ENCODE measurements at regions of chr4 and their contacts with region 1.

Region 1: GRCh38 chr4:78864405-78865024 is 74.7 kb downstream of the PAQR3 start:
- DNase-seq: peak; percentile 34
- H3K4me3 ChIP-seq: no peak overlapping the region; a peak in 1 of 4 replicates
- H3K27ac ChIP-seq: no peak overlapping the region
- H3K4me1 ChIP-seq: no peaks in the 10 kb centered on the region; a peak in 1 of 4 replicates
- H3K27me3 ChIP-seq: no peaks in the 10 kb centered on the region
- CTCF ChIP-seq: peak; percentile 91
- EP300 ChIP-seq: no peak
- RAD21 ChIP-seq: peak; percentile 94

Region 2: DNA sequence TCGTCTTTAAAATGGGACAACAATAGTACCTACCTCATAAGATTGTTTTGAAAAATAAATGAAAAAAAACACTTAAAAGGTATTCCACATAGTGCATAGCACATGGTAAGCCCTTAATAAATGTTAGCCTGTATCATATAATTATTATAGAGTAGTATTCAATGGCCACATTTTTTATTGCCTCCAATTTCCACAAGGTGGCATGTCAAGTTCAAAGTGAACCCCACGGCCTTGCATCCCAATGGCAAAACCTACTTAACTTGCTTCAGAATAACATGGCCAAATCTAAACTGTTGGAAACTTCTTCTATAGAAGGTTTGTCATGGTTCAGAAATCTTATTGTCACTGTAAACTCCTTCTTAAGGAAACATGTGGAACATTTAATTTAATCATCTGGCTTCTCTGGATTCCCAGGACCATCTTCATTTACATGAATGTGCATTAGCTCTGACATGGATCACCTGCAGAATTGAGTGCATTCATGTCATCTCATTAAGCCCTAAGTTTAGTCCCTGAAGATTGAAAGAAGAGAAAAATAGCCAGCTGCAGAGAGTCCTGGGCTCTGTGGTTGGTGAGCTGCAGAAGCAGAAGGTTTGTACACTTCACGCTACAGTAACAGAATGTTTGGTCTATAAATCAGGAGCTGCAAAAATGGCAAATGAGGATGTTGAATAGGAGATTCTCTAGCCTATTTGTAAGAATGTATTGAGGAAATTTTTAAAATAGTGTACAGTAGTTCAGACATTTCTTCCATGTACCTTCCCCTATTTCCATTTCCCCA is 251.9 kb before region 1 on chr4:
- CTCF ChIA-PET with region 1: interaction called, 80 read pairs
- POLR2A ChIA-PET with region 1: no interaction called
- DNase-seq: peak; percentile 35
- H3K4me3 ChIP-seq: no peak overlapping the region
- H3K27ac ChIP-seq: no peak overlapping the region
- H3K4me1 ChIP-seq: peaks cover 0 to 9% of the 10 kb centered on the region in 2 experiments; a peak in 1 of 4 replicates
- H3K27me3 ChIP-seq: no peaks in the 10 kb centered on the region
- CTCF ChIP-seq: peak; percentile 81
- EP300 ChIP-seq: no peak
- RAD21 ChIP-seq: peak; percentile 87

Region 3: GRCh38 chr4:78845472-78845871 is 19.0 kb before region 1 on chr4:
- CTCF ChIA-PET with region 1: interaction called, 41 read pairs
- POLR2A ChIA-PET with region 1: no interaction called
- DNase-seq: no peak
- H3K4me3 ChIP-seq: no peak overlapping the region
- H3K27ac ChIP-seq: no peak overlapping the region
- H3K4me1 ChIP-seq: no peaks in the 10 kb centered on the region; a peak in 1 of 4 replicates
- H3K27me3 ChIP-seq: no peaks in the 10 kb centered on the region
- CTCF ChIP-seq: no peak
- EP300 ChIP-seq: no peak
- RAD21 ChIP-seq: no peak

Region 4: GRCh38 chr4:79107014-79107413 is 242.5 kb after region 1 on chr4:
- CTCF ChIA-PET with region 1: no interaction called
- POLR2A ChIA-PET with region 1: no interaction called
- DNase-seq: no peak
- H3K4me3 ChIP-seq: no peak overlapping the region
- H3K27ac ChIP-seq: no peak overlapping the region
- H3K4me1 ChIP-seq: no peaks in the 10 kb centered on the region
- H3K27me3 ChIP-seq: no peaks in the 10 kb centered on the region
- CTCF ChIP-seq: no peak
- EP300 ChIP-seq: no peak
- RAD21 ChIP-seq: no peak

Region 5: DNA sequence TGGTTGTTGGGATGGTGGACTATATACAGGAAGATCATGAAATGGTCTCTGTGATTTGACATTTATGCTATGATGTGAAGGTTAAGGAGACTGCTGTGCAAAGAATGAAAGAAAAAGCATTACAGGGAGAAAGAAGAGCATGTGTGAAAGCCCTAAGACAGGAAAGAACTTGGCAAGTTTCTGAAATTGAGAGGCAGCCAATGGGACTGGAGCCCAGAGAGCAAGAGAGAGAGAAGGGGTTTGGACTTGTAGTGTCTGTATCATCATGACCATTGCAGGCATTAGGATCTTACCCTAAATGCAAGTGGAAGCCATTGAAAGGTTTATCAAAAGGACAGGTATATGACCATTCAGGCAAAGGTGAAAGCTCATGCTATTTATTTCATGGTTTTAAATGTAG is 314.2 kb after region 1 on chr4:
- CTCF ChIA-PET with region 1: no interaction called
- POLR2A ChIA-PET with region 1: no interaction called
- DNase-seq: no peak
- H3K4me3 ChIP-seq: no peak overlapping the region
- H3K27ac ChIP-seq: no peak overlapping the region
- H3K4me1 ChIP-seq: no peaks in the 10 kb centered on the region; a peak in 1 of 4 replicates
- H3K27me3 ChIP-seq: no peaks in the 10 kb centered on the region
- CTCF ChIP-seq: no peak
- EP300 ChIP-seq: no peak
- RAD21 ChIP-seq: no peak